Heart left ventricle (tissue), 16 donors: ENCODE measurements at regions of chr11 and their contacts with region 1.

Region 1: DNA sequence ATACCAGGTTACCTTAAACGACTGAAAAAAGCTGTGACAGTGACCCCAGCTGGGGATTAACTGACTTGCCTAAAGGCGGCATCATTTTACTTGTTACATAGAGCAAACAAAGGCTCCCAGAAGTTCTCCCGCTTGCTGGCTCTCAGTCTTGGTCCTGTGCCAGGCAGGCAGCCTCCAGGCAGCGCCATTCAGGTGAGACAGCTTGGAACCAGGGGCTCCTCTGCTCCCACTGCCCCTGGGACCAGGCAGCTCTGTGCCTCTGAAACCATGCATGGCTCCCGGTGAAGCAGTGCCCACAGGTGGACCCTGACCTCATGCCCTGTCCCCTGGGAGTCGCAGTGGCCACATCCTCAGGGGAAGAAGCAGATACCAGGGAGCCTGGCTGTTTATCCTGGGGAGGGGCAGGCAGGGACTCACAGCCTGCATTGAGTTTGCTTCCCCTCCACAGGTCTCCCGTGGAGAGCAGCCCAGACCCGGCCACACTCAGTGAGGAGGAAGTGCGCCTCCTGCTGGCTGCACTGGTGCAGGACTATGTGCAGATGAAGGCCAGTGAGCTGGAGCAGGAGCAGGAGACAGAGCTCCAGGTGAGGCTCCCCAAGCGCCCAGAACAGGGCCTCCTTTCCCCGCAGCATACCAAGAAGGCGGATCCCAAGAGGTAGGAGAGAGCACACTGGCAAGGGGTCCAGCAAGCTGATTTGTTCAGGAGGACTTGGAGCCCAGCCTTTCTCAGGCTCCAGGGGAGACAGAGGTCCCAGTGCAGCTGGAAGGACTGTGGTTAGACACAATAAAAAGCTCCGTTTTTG is 15.6 kb upstream of the CYP2R1 start:
- DNase-seq: peak; percentile 54 to 89 (median 73)
- ATAC-seq: peak; percentile 54 to 77 (median 72)
- H3K4me3 ChIP-seq: no peak overlapping the region
- H3K27ac ChIP-seq: no peak overlapping the region
- H3K4me1 ChIP-seq: peaks cover 0 to 24% (median 8%) of the 10 kb centered on the region in 12 donors
- H3K27me3 ChIP-seq: no peaks in the 10 kb centered on the region
- CTCF ChIP-seq: peak; percentile 48 to 87 (median 70)
- POLR2A ChIP-seq: no peak

Region 2: GRCh38 chr11:14300661-14301304 is 606.8 kb before region 1 on chr11:
- intact Hi-C with region 1: loop called in 1 of 10 experiments (anchors 10 kb)
- DNase-seq: peak in 4 of 5 donors; percentile 32 to 40 (median 37)
- ATAC-seq: peak; percentile 76 to 93 (median 91)
- H3K4me3 ChIP-seq: no peak overlapping the region
- H3K27ac ChIP-seq: no peak overlapping the region
- H3K4me1 ChIP-seq: peaks cover 0 to 41% (median 15%) of the 10 kb centered on the region in 12 donors
- H3K27me3 ChIP-seq: no peaks in the 10 kb centered on the region
- CTCF ChIP-seq: peak; percentile 67 to 83 (median 76)
- POLR2A ChIP-seq: no peak

Region 3: GRCh38 chr11:14537134-14537599 is 370.4 kb before region 1 on chr11:
- intact Hi-C with region 1: loop called in 9 of 10 experiments (anchors 1 to 5 kb)
- DNase-seq: no peak
- ATAC-seq: no peak
- H3K4me3 ChIP-seq: peak overlapping the region in 1 of 12 donors; percentile 23
- H3K27ac ChIP-seq: peak overlapping the region in 4 of 12 donors; percentile 42 to 74 (median 54)
- H3K4me1 ChIP-seq: peaks cover 0 to 45% (median 29%) of the 10 kb centered on the region in 12 donors
- H3K27me3 ChIP-seq: no peaks in the 10 kb centered on the region
- CTCF ChIP-seq: peak; percentile 66 to 86 (median 78)
- POLR2A ChIP-seq: no peak

Region 4: DNA sequence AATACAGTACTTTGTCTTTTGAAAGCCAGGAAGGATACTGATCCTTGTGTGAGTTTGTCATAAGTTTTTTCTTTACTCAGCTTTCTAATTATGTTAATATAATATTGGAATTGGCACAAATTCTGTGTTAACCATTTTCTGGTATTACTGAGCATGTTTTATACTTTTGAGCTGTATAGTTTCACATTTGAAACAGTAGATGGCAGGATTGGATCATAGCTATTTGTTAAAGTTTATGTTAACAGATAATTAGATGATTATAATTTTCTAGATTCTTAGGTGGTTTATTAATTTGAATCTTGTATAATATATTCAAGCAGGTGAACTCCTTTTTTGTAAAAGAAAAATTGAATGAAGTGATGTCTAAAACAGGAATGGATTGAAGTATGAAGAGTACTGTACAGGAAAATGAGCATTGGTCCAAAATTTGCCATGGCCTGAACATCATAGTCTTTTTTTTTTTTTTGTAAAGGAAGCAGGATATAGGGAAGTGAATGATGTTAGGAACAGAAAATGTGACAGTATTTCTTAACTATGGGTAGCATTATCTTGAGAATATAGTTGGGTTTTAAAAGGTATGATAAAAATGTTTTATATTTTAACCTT is 117.6 kb before region 1 on chr11:
- intact Hi-C with region 1: loop called in 7 of 10 experiments (anchors 2 to 10 kb)
- DNase-seq: no peak
- ATAC-seq: no peak
- H3K4me3 ChIP-seq: no peak overlapping the region
- H3K27ac ChIP-seq: no peak overlapping the region
- H3K4me1 ChIP-seq: peaks cover 0 to 8% (median 0%) of the 10 kb centered on the region in 12 donors
- H3K27me3 ChIP-seq: no peaks in the 10 kb centered on the region
- CTCF ChIP-seq: peak; percentile 23 to 58 (median 36)
- POLR2A ChIP-seq: no peak

Region 5: DNA sequence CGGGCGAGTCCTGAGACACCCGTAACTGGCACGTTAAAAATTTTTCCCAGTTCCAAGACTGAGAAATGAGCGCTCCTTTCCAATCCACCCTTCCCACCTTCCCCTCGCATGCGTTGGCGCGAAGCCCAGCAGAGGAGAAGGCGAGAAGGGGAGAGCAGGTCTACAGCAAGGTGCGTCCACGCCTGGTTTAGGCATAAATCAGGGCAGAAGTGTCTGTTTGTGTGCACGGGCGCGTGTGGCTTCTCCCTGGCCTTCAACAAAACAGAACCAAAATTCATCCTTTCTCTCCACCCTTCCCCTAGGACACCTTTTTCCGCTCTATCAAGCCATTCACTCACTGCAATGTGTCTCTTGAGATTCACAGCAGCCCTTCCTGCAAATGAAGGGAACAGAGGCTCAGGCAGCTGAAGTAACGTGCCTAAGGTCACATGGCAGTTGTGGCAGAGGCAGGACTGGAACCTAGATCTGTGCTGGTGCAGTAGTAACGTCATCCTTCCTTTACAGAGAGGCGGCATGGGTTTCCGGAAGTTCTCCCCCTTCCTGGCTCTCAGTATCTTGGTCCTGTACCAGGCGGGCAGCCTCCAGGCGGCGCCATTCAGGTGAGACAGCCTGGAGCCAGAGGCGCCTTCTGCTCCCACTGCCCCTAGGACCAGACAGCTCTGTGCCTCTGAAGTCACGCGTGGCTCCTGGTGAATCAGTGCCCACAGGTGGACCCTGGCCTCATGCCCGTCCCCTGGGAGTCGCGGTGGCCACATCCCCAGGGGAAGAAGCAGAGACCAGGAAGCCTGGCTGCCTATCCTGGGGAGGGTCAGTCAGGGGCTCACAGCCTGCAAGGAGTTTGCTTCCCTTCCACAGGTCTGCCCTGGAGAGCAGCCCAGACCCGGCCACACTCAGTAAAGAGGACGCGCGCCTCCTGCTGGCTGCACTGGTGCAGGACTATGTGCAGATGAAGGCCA is 166.9 kb after region 1 on chr11:
- intact Hi-C with region 1: loop called (anchors 1 to 5 kb)
- DNase-seq: peak; percentile 69 to 89 (median 77)
- ATAC-seq: peak; percentile 90 to 95 (median 92)
- H3K4me3 ChIP-seq: peak overlapping the region; percentile 2 to 43 (median 33)
- H3K27ac ChIP-seq: no peak overlapping the region
- H3K4me1 ChIP-seq: peaks cover 0 to 21% (median 13%) of the 10 kb centered on the region in 12 donors
- H3K27me3 ChIP-seq: peaks cover 9 to 56% (median 33%) of the 10 kb centered on the region in 9 donors
- CTCF ChIP-seq: peak; percentile 56 to 79 (median 66)
- POLR2A ChIP-seq: no peak

Region 6: GRCh38 chr11:15605094-15605493 is 697.5 kb after region 1 on chr11:
- intact Hi-C with region 1: no loop called
- DNase-seq: peak in 4 of 5 donors; percentile 39 to 48 (median 42)
- ATAC-seq: peak; percentile 53 to 83 (median 62)
- H3K4me3 ChIP-seq: no peak overlapping the region
- H3K27ac ChIP-seq: no peak overlapping the region
- H3K4me1 ChIP-seq: peaks cover 4 to 28% (median 11%) of the 10 kb centered on the region in 12 donors
- H3K27me3 ChIP-seq: no peaks in the 10 kb centered on the region
- CTCF ChIP-seq: no peak
- POLR2A ChIP-seq: no peak